Activated naive CD4-positive, alpha-beta T cell treated with anti-CD3 and anti-CD28 coated beads for 36 hours (primary cell): ENCODE measurements at regions of chrX and their contacts with region 1.

Region 1: DNA sequence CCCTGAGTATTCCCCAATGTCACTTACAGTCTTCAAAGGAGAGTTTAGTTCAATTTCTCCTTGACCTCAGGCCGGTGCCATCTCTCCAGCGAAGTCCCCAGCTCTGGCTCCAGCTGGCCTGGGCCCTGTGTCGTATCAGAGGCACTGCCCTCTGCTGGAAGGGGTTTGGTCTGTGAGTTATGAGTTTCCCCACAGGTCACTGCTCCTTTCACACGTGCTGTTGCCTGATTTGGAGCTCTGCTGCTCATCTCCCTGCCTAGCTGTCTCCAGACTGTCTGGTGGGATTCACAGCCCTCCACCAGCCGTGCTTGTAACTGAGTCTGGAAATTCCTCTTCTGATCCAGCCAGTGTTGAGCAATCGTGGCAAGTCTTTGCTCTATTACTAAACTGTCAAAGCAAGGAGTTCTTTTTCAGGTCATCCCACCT is at the start of gene RAP2C:
- DNase-seq: peak; percentile 76
- H3K4me3 Mint-ChIP-seq: peak within 1 kb of the TSS; percentile 74
- H3K27ac Mint-ChIP-seq: peak within 1 kb of the TSS; percentile 85
- H3K4me1 Mint-ChIP-seq: peaks cover 15% of the 10 kb centered on the region
- H3K27me3 Mint-ChIP-seq: no peaks in the 10 kb centered on the region
- total RNA-seq, gene RAP2C: 24.5 to 27.4 TPM

Region 2: DNA sequence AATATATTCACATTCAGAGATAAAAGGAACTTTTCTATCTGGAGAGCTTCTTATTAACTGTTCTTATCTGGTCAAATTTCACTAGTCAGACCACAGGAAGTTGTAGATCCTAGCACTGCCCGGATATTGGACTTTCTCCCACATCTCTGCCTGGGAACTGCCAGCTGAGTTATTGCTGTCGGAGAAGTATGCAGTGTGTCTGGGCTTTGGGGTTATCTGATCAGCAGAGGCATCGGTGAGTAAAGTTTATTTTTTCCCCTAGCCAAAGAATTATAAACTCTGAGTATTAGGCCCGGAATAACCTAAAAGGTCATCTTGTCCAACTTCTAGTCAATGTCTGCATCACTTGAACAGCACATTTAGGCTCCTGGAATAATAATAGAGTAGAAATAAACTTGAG is 630.3 kb before region 1 on chrX:
- CTCF ChIA-PET with region 1: no interaction called
- intact Hi-C with region 1: no loop called
- DNase-seq: no peak
- H3K4me3 Mint-ChIP-seq: no peak overlapping the region
- H3K27ac Mint-ChIP-seq: no peak overlapping the region
- H3K4me1 Mint-ChIP-seq: no peaks in the 10 kb centered on the region
- H3K27me3 Mint-ChIP-seq: peaks cover 6% of the 10 kb centered on the region

Region 3: GRCh38 chrX:131841496-131842410 is 377.6 kb before region 1 on chrX:
- CTCF ChIA-PET with region 1: interaction called, 15 read pairs
- intact Hi-C with region 1: loop called (anchors 1 kb)
- DNase-seq: peak; percentile 25
- H3K4me3 Mint-ChIP-seq: no peak overlapping the region
- H3K27ac Mint-ChIP-seq: no peak overlapping the region
- H3K4me1 Mint-ChIP-seq: peaks cover 4% of the 10 kb centered on the region
- H3K27me3 Mint-ChIP-seq: no peaks in the 10 kb centered on the region

Region 4: GRCh38 chrX:131987252-131987651 is 232.1 kb before region 1 on chrX:
- CTCF ChIA-PET with region 1: interaction called, 3 read pairs
- intact Hi-C with region 1: loop called (anchors 2 kb)
- DNase-seq: peak; percentile 28
- H3K4me3 Mint-ChIP-seq: peak overlapping the region; percentile 20
- H3K27ac Mint-ChIP-seq: peak overlapping the region; percentile 94
- H3K4me1 Mint-ChIP-seq: peaks cover 48% of the 10 kb centered on the region
- H3K27me3 Mint-ChIP-seq: no peaks in the 10 kb centered on the region

Region 5: DNA sequence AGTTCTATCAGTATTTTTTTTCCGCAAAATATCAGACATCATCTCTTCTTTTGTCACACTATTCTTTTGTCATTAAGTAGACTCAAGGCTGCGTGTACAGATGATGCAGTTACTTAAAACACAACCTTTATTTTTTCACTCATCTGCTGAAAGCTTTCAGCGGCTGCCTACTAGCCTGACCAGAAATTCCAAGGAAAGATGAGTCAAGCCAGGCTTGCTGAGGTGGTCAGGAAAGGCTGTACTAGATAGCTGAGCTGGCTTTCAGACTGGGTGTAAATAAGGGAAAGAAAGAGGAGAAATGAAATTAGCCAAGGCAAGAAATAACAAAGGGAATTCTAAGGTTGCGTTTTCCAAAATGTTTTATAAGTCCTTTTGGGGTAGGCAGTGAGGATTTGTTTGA is 178.3 kb before region 1 on chrX:
- CTCF ChIA-PET with region 1: no interaction called
- intact Hi-C with region 1: no loop called
- DNase-seq: no peak
- H3K4me3 Mint-ChIP-seq: no peak overlapping the region
- H3K27ac Mint-ChIP-seq: no peak overlapping the region
- H3K4me1 Mint-ChIP-seq: peaks cover 55% of the 10 kb centered on the region
- H3K27me3 Mint-ChIP-seq: no peaks in the 10 kb centered on the region

Region 6: GRCh38 chrX:132092439-132093065 is 126.8 kb before region 1 on chrX:
- CTCF ChIA-PET with region 1: interaction called, 27 read pairs
- intact Hi-C with region 1: loop called (anchors 1 kb)
- DNase-seq: peak; percentile 77
- H3K4me3 Mint-ChIP-seq: no peak overlapping the region
- H3K27ac Mint-ChIP-seq: no peak overlapping the region
- H3K4me1 Mint-ChIP-seq: no peaks in the 10 kb centered on the region
- H3K27me3 Mint-ChIP-seq: no peaks in the 10 kb centered on the region

Region 7: GRCh38 chrX:132480581-132481203 is 261.3 kb after region 1 on chrX:
- CTCF ChIA-PET with region 1: no interaction called
- intact Hi-C with region 1: loop called (anchors 1 kb)
- DNase-seq: peak; percentile 61
- H3K4me3 Mint-ChIP-seq: peak overlapping the region; percentile 75
- H3K27ac Mint-ChIP-seq: peak overlapping the region; percentile 96
- H3K4me1 Mint-ChIP-seq: peaks cover 44% of the 10 kb centered on the region
- H3K27me3 Mint-ChIP-seq: no peaks in the 10 kb centered on the region

Region 8: DNA sequence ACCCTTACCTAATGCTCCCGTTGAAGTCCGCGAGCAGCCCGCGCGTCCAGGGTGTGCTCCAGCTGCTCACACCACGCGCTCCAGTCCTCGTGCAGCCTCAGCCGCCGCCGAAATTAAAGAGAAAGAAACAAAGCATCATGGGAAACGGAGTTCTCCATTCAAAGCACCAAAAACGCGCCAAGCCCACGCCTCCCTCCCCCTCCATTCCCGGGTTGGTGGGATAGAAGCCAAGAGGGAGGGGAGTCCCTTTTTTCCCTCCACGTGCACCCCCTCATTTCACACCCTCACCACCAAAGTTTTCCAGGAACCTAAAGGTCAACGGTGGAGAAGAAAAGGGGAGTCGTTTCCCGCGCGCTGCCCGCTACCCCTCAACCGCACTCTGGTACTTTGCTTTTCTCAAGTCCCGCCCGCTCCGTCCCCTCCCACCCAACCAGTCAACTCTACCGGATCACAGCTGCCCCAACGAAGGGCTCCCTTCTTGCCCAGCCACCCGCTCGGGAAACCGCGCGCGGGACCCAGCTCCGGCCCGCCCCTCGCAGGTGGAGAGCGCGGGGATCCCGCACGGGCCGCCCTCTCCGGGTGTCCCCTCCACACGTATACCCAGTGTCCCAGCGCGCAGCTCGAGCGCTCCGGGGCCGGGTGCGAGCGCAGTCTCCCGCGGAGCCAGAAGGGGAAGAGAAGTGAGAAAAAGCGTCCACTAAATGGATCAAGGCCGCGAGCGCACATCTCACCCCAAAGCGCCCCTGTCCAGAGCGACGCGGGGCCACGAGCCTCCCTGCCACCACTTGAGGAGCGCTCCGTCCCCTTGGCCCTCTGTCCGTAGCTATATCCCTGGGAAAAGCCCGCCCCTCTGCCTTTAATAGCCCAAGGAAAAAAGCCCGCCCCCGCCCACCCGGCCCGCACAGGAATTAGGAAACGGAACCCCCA is 1952.6 kb after region 1 on chrX:
- CTCF ChIA-PET with region 1: no interaction called
- intact Hi-C with region 1: loop called (anchors 10 kb)
- DNase-seq: peak; percentile 53
- H3K4me3 Mint-ChIP-seq: peak overlapping the region; percentile 77
- H3K27ac Mint-ChIP-seq: peak overlapping the region; percentile 87
- H3K4me1 Mint-ChIP-seq: peaks cover 19% of the 10 kb centered on the region
- H3K27me3 Mint-ChIP-seq: peaks cover 3% of the 10 kb centered on the region